ENCODE measurements at regions of chr2 and their contacts with region 1.

Region 1: DNA sequence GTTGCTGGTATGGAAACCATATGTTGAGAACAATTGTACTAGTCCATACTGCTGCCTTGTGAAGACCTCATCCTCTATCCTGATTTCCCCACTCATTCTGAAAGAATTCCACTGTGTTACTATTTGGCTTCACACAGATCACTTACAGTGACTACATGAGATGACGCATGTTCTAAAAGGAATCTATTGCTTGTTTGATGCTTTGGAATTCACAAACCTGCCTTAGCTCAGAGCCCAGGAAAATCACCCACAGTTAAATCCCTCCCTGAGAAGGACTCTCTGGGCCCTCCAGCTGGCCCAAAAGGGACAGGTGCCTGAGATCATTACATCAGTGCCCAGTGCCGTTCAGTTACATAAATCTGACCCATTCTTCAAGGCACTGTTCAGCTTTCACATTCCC is 45.3 kb downstream of the KLHL29 start:
- DNase-seq: peak; percentile 99
- ATAC-seq: peak; percentile 79
- H3K4me3 ChIP-seq: no peak overlapping the region
- H3K27ac ChIP-seq: peak overlapping the region; percentile 73
- H3K4me1 ChIP-seq: peaks cover 40% of the 10 kb centered on the region
- H3K27me3 ChIP-seq: no peaks in the 10 kb centered on the region
- CTCF ChIP-seq: no peak
- POLR2A ChIP-seq: no peak
- RAD21 ChIP-seq: peak; percentile 22

Region 2: DNA sequence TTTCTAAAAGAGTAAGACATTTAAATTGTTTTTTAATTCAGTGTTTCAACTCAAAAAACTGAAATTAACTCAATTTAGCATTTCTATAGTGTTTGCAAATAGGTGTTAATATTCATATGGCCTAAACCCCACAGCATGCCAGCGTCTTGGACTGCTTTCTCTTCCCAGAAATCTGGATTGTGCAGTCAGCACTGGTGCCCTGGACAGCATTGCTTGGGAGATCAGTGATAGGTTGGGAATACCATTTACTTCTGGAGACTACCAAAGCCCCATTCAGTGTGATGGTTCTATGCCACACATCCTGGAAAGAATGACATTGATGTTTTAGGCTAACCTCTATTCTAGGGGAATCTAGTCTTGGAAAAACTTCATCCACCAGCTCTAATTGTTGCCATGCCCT is 500.3 kb before region 1 on chr2:
- CTCF ChIA-PET with region 1: no interaction called
- POLR2A ChIA-PET with region 1: no interaction called
- dilution Hi-C with region 1: no loop called
- in situ Hi-C with region 1: no loop called
- intact Hi-C with region 1: no loop called
- DNase-seq: no peak
- ATAC-seq: no peak
- H3K4me3 ChIP-seq: no peak overlapping the region
- H3K27ac ChIP-seq: no peak overlapping the region
- H3K4me1 ChIP-seq: no peaks in the 10 kb centered on the region
- H3K27me3 ChIP-seq: no peaks in the 10 kb centered on the region
- CTCF ChIP-seq: no peak
- POLR2A ChIP-seq: no peak
- RAD21 ChIP-seq: no peak

Region 3: GRCh38 chr2:23480991-23481827 is 50.9 kb after region 1 on chr2:
- CTCF ChIA-PET with region 1: interaction called, 3 read pairs
- POLR2A ChIA-PET with region 1: no interaction called
- dilution Hi-C with region 1: no loop called
- in situ Hi-C with region 1: no loop called
- intact Hi-C with region 1: loop called (anchors 1 kb)
- DNase-seq: peak; percentile 90
- ATAC-seq: peak; percentile 87
- H3K4me3 ChIP-seq: no peak overlapping the region
- H3K27ac ChIP-seq: peak overlapping the region; percentile 67; the same call in 1 of the 2 replicates
- H3K4me1 ChIP-seq: peaks cover 15% of the 10 kb centered on the region
- H3K27me3 ChIP-seq: no peaks in the 10 kb centered on the region
- CTCF ChIP-seq: no peak
- POLR2A ChIP-seq: no peak
- RAD21 ChIP-seq: no peak

Region 4: DNA sequence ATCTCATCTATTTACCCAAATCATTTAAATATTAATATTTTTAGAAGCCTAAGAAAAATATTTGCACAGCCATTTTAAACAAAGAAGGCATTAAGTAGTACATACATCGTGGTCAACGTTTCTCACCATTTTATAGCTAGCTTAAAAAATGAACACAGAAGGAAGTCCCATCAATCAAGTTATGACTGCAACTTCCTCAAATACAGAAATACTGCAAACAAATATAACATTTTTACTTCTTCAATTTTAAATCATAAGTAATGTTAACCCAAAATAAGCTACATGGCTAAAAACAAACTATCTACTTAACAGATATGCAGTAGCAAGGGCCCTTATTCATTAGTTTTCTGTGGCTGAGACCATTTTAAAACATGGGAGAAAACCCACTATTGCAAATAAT is 899.4 kb after region 1 on chr2:
- CTCF ChIA-PET with region 1: no interaction called
- POLR2A ChIA-PET with region 1: no interaction called
- dilution Hi-C with region 1: no loop called
- in situ Hi-C with region 1: no loop called
- intact Hi-C with region 1: no loop called
- DNase-seq: no peak
- ATAC-seq: no peak
- H3K4me3 ChIP-seq: no peak overlapping the region
- H3K27ac ChIP-seq: no peak overlapping the region
- H3K4me1 ChIP-seq: no peaks in the 10 kb centered on the region; the same call in 1 of the 2 replicates
- H3K27me3 ChIP-seq: no peaks in the 10 kb centered on the region
- CTCF ChIP-seq: no peak
- POLR2A ChIP-seq: no peak
- RAD21 ChIP-seq: no peak